Activated CD8-positive, alpha-beta memory T cell treated with anti-CD3 and anti-CD28 coated beads, Interleukin-2, amount 10 ng/mL, durations not matched to agents 7 days and 5 days (primary cell): ENCODE measurements at regions of chr6 and their contacts with region 1.

Region 1: DNA sequence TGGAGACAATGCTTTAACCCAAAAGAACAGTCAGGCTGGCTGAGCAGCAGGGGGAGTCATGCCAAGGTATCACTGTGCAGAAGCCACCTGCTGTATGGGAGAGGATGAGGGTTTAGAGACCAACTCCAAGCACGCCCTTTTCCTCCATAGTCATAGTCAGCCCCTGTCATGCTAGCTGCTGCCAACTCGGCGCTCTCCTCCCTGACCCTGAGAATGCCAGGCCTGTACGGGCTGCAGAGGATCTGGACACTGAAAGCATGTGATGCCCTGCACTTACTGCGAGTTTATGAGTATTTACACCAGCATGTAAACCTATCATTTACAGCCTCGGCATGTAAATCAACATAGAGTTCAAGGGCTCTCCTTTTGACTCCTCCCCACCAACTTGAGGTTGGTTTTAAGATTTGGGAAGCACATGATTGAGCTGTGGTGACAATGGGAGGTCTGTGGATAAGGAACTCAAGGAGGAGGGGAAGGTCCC is 11.7 kb upstream of the SCUBE3 start:
- DNase-seq: no peak
- ATAC-seq: no peak
- H3K4me3 Mint-ChIP-seq: no peak overlapping the region
- H3K27ac Mint-ChIP-seq: no peak overlapping the region
- H3K4me1 Mint-ChIP-seq: no peaks in the 10 kb centered on the region
- H3K27me3 Mint-ChIP-seq: peaks cover 56% of the 10 kb centered on the region

Region 2: DNA sequence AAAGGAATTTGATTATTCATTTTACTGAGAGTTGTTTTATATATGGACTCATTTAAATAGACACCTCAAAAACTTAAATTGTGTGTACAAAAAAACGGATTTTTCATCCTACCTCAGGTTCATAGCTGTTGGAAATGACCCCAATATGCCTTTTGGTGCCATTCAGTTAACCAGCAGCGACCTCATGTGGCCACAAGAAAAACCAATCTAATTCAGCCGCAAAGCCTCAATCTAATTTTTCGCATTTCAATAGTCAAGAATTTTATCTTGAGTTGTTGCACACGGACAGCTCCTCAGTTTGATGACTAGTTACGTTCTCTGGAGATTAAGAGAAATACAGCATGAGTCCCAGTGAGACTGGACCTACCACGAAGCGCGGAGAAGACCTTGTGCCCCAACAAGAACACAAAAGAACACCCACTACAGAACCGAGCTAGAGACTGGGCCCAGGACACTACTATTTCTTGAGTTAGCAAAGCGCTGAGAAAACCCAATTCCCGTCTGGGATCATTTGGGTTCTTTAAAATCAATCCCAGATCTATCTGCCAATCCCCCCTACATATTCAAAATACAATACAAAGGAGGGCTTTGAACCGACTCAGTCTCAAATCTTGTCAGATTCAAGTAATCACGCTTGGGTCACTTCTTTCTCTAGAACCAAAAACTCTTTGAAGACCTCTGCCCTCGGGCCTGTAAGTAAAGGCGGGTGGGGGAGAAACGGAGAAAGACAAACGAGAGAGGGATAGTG is 62.0 kb before region 1 on chr6:
- CTCF ChIA-PET with region 1: interaction called, 158 read pairs
- DNase-seq: peak; percentile 67
- ATAC-seq: peak; percentile 32
- H3K4me3 Mint-ChIP-seq: peak overlapping the region; percentile 14
- H3K27ac Mint-ChIP-seq: no peak overlapping the region
- H3K4me1 Mint-ChIP-seq: peaks cover 20% of the 10 kb centered on the region
- H3K27me3 Mint-ChIP-seq: peaks cover 37% of the 10 kb centered on the region

Region 3: GRCh38 chr6:35146453-35146852 is 55.7 kb before region 1 on chr6:
- CTCF ChIA-PET with region 1: interaction called, 158 read pairs
- DNase-seq: peak; percentile 70
- ATAC-seq: no peak
- H3K4me3 Mint-ChIP-seq: no peak overlapping the region
- H3K27ac Mint-ChIP-seq: no peak overlapping the region
- H3K4me1 Mint-ChIP-seq: peaks cover 42% of the 10 kb centered on the region
- H3K27me3 Mint-ChIP-seq: peaks cover 18% of the 10 kb centered on the region

Region 4: GRCh38 chr6:35213824-35214756 is 12.0 kb after region 1 on chr6 and contains the start of gene SCUBE3:
- CTCF ChIA-PET with region 1: interaction called, 11 read pairs
- DNase-seq: no peak
- ATAC-seq: peak; percentile 72
- H3K4me3 Mint-ChIP-seq: peak within 1 kb of the TSS; percentile 38
- H3K27ac Mint-ChIP-seq: no peak within 1 kb of the TSS
- H3K4me1 Mint-ChIP-seq: peaks cover 6% of the 10 kb centered on the region
- H3K27me3 Mint-ChIP-seq: peaks cover 71% of the 10 kb centered on the region
- total RNA-seq, gene SCUBE3: 0.12 to 0.54 TPM